A549 (cell line): ENCODE measurements at regions of chr4 and their contacts with region 1.

Region 1: DNA sequence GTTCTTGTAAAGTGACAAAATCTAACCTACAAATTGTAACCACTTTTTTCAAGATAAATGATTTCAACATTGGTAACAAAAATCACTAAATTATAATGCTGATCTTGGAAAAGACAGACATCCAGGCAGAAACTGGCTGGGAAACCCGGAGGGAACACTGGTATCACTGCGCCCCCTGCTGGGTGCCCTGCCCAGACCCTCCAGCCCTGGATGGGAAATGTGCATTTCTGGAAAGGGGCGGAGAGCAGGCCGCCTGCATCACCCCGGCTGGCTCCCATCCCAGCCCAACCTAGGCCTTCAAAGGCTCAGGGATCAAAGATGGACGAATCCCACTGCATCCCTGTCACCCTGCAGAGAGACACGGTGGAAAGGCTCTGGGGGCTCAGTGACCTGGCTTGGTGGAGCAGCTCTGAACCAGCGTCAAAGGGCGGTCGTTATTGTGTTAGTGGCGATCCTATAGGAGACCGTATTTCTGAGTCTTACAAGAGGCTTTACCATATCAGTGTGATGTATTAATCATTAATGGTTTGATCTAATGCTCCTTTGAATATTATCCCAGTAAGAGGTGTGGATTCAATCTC is 37.3 kb downstream of the ACOX3 start:
- DNase-seq: peak; percentile 66 to 81
- ATAC-seq: peak; percentile 90 to 96
- H3K4me3 ChIP-seq: no peak overlapping the region
- H3K27ac ChIP-seq: no peak overlapping the region
- H3K4me1 ChIP-seq: peaks cover 3% of the 10 kb centered on the region; the same call in 1 of the 3 replicates
- CTCF ChIP-seq: peak; percentile 81
- EP300 ChIP-seq: no peak
- POLR2A ChIP-seq: no peak
- RAD21 ChIP-seq: peak; percentile 93 to 96

Region 2: GRCh38 chr4:8176547-8177399 is 226.5 kb before region 1 on chr4:
- CTCF ChIA-PET with region 1: interaction called, 29 read pairs
- POLR2A ChIA-PET with region 1: no interaction called
- DNase-seq: peak; percentile 60 to 73
- ATAC-seq: peak; percentile 90 to 97
- H3K4me3 ChIP-seq: no peak overlapping the region
- H3K27ac ChIP-seq: peak overlapping the region in 1 of 2 experiments; percentile 57; a peak in 2 of 6 replicates
- H3K4me1 ChIP-seq: peaks cover 8% of the 10 kb centered on the region
- CTCF ChIP-seq: peak; percentile 69
- EP300 ChIP-seq: no peak
- POLR2A ChIP-seq: no peak
- RAD21 ChIP-seq: peak; percentile 77 to 88

Region 3: DNA sequence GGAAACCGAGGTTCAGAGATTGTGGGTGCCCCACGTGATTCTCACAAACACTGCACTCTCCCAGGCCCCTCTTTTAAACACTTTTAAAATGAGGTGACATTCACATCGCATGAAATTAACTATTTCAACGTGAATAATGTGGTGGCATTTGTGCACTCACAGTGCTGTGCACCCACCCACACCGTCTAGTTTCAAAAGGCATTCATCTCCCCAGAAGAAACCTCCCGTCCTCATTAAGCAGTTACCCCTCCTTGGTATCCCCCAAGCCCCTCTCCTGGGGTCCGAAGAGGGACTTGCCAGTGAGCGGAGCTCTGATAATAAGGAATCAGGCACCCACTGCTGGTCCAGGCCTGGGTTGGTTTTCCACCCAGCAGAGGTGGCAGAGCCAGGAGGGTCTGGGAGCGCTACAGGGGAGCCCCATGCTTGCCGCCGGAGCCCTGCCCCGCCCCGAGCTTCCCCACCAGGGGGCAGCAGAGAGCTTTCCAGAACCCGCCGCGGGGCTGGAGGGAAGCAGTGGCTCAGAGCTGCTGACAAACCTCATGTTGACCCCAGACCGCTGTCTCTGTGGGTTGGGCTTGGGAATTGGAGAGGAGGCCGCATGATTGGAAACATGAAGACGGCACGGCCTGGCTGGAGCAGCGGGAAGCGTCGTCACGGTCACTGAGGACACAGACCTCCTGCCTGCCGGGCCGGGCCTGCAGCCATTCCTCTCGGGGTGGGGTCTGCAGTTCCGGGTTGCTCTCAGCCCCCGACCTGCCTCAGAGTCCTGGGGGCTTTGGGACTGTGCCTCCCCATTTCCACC is 161.2 kb before region 1 on chr4:
- CTCF ChIA-PET with region 1: interaction called, 270 read pairs
- POLR2A ChIA-PET with region 1: no interaction called
- DNase-seq: peak; percentile 73 to 76
- ATAC-seq: peak; percentile 80 to 92
- H3K4me3 ChIP-seq: no peak overlapping the region
- H3K27ac ChIP-seq: peak overlapping the region; percentile 45 to 82; a peak in 5 of 6 replicates
- H3K4me1 ChIP-seq: peaks cover 20% of the 10 kb centered on the region
- CTCF ChIP-seq: peak; percentile 72
- EP300 ChIP-seq: no peak
- POLR2A ChIP-seq: no peak
- RAD21 ChIP-seq: peak; percentile 86 to 89

Region 4: DNA sequence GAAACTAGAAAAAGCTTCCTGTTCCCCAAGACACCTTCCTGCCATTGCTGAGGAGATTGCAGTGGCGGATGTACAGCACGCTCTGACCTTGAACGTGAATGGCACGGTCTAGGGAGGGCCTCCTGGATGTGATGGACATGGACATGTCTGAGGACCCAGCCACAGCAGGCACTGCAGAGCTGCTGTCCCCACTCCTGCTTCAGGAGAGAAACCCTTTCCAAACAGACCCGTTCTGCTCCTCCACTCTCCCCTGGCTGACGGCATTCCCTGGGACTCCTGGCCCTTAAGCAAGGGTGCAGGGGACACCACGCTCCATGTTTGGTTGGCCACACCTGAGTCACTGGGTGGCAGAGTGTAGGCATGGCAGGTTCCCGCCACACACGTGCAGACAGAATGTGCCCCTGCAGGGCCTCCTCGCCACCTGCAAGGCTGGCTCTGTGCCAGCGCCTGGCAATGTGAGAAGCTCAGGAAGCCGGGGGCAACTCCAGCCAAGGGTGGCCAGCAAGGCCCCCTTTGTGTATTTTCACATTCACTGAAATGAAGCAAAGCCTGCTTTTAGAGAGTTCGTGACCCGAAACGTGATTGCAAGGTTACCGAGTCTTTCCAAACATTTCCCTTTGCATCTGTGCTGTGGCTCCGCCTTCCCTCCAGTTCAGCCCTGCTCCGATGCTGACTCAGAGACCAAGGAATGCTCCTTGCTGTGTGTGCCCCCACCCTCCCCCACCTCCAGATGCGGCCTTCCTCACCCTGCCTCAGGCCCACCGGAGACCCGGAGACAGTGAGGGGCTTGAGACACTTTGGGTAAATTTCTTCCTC is 87.6 kb before region 1 on chr4:
- CTCF ChIA-PET with region 1: interaction called, 12 read pairs
- POLR2A ChIA-PET with region 1: no interaction called
- DNase-seq: peak; percentile 60 to 64
- ATAC-seq: peak; percentile 94 to 96
- H3K4me3 ChIP-seq: no peak overlapping the region
- H3K27ac ChIP-seq: peak overlapping the region; percentile 71 to 84
- H3K4me1 ChIP-seq: peaks cover 17% of the 10 kb centered on the region
- CTCF ChIP-seq: no peak
- EP300 ChIP-seq: no peak
- POLR2A ChIP-seq: no peak
- RAD21 ChIP-seq: no peak

Region 5: DNA sequence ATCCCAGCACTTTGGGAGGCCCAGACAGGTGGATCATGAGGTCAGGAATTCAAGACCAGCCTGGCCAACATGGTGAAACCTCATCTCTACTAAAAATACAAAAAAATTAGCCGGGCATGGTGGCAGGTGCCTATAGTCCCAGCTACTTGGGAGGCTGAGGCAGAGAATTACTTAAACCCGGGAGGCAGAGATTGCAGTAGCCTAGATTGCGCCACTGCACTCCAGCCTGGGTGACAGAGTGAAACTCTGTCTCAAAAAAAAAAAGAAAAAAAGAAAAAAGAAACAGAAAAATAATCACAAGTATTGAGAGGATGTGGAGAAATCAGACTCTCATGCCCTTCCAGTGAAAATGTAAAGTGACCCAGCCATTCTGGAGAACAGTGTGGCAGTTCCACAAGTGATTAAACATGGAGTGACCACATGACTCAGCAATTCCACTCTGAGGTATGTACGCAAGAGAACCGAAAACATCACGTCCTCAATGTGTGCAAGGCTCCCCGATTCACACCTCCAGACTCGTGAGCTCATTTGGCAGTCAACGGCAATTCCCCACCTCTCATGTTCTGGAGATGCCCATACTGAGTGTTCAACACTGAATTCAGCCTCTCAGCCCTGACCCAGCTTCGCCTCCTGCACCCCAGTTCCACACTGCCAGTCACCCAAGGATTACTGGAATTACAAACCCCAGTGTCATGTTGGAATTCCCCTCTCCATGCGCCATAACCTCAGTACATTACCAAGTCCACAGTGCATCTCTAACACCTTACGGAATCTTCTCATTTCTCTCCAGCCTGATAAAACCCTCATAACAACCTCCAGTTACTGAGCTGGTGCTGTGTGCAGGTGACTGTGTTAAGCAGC is 16.1 kb after region 1 on chr4:
- CTCF ChIA-PET with region 1: interaction called, 10 read pairs
- POLR2A ChIA-PET with region 1: no interaction called
- DNase-seq: peak in 1 of 2 experiments; percentile 14
- ATAC-seq: no peak
- H3K4me3 ChIP-seq: no peak overlapping the region
- H3K27ac ChIP-seq: peak overlapping the region; percentile 3 to 28; a peak in 4 of 6 replicates
- H3K4me1 ChIP-seq: peaks cover 10% of the 10 kb centered on the region
- CTCF ChIP-seq: no peak
- EP300 ChIP-seq: no peak
- POLR2A ChIP-seq: no peak
- RAD21 ChIP-seq: no peak